ENCODE measurements at regions of chr12 and their contacts with region 1.

Region 1: GRCh38 chr12:48758221-48758620 is 30.7 kb downstream of the ADCY6 start:
- H3K4me3 ChIP-seq: no peak overlapping the region
- H3K27ac ChIP-seq: no peak overlapping the region
- H3K4me1 ChIP-seq: no peaks in the 10 kb centered on the region
- CTCF ChIP-seq: no peak

Region 2: GRCh38 chr12:48527891-48528675 is 230.1 kb before region 1 on chr12:
- CTCF ChIA-PET with region 1: no interaction called
- POLR2A ChIA-PET with region 1: no interaction called
- H3K4me3 ChIP-seq: no peak overlapping the region
- H3K27ac ChIP-seq: no peak overlapping the region
- H3K4me1 ChIP-seq: no peaks in the 10 kb centered on the region
- CTCF ChIP-seq: no peak

Region 3: GRCh38 chr12:48728807-48729206 is 29.4 kb before region 1 on chr12:
- CTCF ChIA-PET with region 1: interaction called, 4 read pairs
- POLR2A ChIA-PET with region 1: interaction called, 12 read pairs
- H3K4me3 ChIP-seq: no peak overlapping the region
- H3K27ac ChIP-seq: no peak overlapping the region
- H3K4me1 ChIP-seq: no peaks in the 10 kb centered on the region
- CTCF ChIP-seq: no peak